ENCODE measurements at regions of chr9 and their contacts with region 1.

Region 1: GRCh38 chr9:133144137-133144903 is 19.4 kb downstream of the GBGT1 start:
- DNase-seq: peak; percentile 98
- H3K4me3 Mint-ChIP-seq: peak overlapping the region; percentile 67
- H3K27ac Mint-ChIP-seq: peak overlapping the region; percentile 88
- H3K4me1 Mint-ChIP-seq: peaks cover 70% of the 10 kb centered on the region
- H3K27me3 Mint-ChIP-seq: no peaks in the 10 kb centered on the region

Region 2: GRCh38 chr9:132849185-132849706 is 295.1 kb before region 1 on chr9:
- CTCF ChIA-PET with region 1: no interaction called
- POLR2A ChIA-PET with region 1: no interaction called
- intact Hi-C with region 1: no loop called
- DNase-seq: peak; percentile 23
- H3K4me3 Mint-ChIP-seq: peak overlapping the region; percentile 1
- H3K27ac Mint-ChIP-seq: peak overlapping the region; percentile 49
- H3K4me1 Mint-ChIP-seq: peaks cover 6% of the 10 kb centered on the region
- H3K27me3 Mint-ChIP-seq: no peaks in the 10 kb centered on the region

Region 3: DNA sequence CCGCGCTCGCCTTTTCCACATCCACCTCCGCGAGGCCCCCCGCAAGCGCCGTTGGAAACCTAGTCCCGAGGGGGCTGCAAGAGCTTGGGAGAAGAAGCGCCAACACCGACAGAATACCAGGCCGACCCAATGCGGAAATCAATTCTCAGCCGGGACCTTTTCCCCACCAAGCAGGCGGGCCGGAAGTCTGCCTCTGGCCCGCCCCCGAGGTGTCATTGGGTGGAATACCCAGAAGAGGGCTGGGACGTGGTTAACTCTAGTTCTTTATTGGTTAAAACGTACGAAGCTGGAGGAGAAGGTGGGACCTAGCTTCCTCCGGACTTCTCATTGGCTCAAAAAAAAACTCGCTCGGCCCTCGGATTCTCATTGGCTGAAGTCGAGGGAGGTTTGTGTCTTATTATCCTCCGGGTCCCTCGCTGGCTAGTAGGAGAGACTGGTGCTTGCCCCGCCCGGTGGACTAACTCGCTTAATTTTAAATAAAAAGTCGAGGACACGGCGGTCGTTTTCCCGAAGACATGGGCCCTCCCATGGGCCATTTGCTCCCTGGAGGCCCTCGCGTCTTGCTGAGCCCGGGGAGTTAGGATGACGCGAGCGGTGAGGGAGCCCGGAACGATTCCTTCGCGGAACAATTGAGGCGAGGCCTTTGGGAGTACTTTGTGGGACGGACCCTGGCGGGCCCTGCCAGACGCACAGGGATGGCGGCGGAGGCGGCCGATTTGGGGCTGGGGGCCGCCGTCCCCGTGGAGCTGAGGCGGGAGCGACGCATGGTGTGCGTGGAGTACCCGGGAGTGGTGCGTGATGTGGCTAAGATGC is 113.8 kb before region 1 on chr9 and contains the start of gene GTF3C5:
- CTCF ChIA-PET with region 1: interaction called, 42 read pairs
- POLR2A ChIA-PET with region 1: interaction called, 7 read pairs
- intact Hi-C with region 1: loop called (anchors 1 kb)
- DNase-seq: peak; percentile 95
- H3K4me3 Mint-ChIP-seq: peak within 1 kb of the TSS; percentile 99
- H3K27ac Mint-ChIP-seq: peak within 1 kb of the TSS; percentile 90
- H3K4me1 Mint-ChIP-seq: peaks cover 42% of the 10 kb centered on the region
- H3K27me3 Mint-ChIP-seq: no peaks in the 10 kb centered on the region
- total RNA-seq, gene GTF3C5: 80.3 to 81.2 TPM

Region 4: DNA sequence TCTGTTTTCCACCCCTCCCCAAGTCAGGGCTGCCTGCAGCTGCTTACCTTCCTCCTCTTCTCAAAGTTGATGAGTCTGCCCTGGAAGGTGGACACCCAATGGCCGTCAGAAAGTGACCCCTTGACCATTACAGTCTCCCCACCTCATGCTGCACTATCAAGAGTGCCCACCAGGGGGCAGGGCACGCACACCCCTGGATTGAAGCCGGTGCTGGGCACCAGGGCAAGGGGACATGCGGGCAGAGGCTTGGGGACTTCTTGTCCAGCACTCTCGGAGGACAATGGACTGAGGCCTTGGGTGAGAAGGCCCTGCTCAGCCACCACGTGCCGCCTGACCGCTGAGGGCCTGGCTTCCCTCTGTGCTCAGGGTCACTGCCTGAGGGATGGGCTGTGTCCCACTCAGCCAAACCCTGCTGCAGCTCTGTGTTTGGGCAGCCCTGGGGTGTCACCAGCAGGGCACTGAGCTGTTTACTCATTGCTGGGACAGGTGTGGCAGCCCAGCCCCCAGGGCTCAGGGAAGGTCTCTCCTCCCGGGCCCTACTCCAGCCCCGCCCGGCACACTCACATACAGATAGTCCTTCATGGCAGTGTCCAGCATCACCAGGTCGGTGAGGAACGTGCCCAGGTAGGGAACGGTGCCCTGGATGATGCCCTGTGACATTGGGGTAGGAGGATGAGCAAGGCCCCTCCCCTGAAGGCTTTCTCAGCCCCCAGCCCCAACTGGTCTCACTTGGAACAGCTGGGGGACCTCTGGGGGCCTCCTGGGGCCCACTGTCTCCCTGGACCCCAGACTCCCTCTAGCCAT is 40.9 kb before region 1 on chr9:
- CTCF ChIA-PET with region 1: interaction called, 552 read pairs
- POLR2A ChIA-PET with region 1: interaction called, 4 read pairs
- intact Hi-C with region 1: loop called (anchors 1 kb)
- DNase-seq: peak; percentile 63
- H3K4me3 Mint-ChIP-seq: no peak overlapping the region
- H3K27ac Mint-ChIP-seq: peak overlapping the region; percentile 44
- H3K4me1 Mint-ChIP-seq: no peaks in the 10 kb centered on the region
- H3K27me3 Mint-ChIP-seq: no peaks in the 10 kb centered on the region

Region 5: DNA sequence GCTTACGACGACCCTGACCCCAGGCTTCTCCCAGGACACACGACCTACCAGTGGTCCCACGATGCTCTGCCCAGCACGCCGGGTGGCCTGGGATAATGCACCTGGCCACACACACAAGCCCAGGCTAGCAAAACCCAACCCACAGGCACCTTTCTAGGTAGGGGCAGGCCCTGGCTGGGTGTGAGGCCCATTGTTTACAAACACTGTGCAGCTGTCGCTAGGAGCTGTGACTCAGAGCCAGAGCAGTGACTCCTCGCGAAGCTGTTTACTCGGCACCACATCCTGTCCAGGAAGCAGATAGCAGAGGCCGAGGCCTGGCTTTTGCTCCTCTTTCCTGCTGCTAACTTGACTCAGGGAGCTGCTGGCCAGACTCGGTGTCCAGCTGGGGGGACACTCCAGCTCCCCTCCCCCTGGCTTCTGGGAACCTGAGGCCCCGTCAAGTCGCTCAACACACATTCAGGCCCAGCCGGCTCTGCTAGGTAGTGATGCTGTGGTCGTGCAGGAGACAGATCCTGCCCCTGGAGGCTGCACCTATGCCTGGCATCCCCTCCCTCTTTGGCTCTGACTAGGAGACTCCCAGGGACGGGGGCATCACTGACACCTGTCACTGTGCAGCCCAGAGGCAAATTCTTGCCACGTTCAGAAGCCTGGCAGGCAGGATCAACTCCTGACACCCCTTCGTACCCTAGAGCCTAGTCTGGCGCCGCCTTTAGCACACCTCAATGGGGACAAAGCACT is 10.5 kb before region 1 on chr9:
- CTCF ChIA-PET with region 1: interaction called, 111 read pairs
- POLR2A ChIA-PET with region 1: interaction called, 42 read pairs
- intact Hi-C with region 1: loop called (anchors 1 kb)
- DNase-seq: peak; percentile 96
- H3K4me3 Mint-ChIP-seq: peak overlapping the region; percentile 70
- H3K27ac Mint-ChIP-seq: peak overlapping the region; percentile 100
- H3K4me1 Mint-ChIP-seq: peaks cover 79% of the 10 kb centered on the region
- H3K27me3 Mint-ChIP-seq: no peaks in the 10 kb centered on the region

Region 6: GRCh38 chr9:133205996-133206931 is 61.9 kb after region 1 on chr9:
- CTCF ChIA-PET with region 1: no interaction called
- POLR2A ChIA-PET with region 1: no interaction called
- intact Hi-C with region 1: no loop called
- DNase-seq: peak; percentile 6
- H3K4me3 Mint-ChIP-seq: no peak overlapping the region
- H3K27ac Mint-ChIP-seq: no peak overlapping the region
- H3K4me1 Mint-ChIP-seq: no peaks in the 10 kb centered on the region
- H3K27me3 Mint-ChIP-seq: peaks cover 11% of the 10 kb centered on the region

Region 7: DNA sequence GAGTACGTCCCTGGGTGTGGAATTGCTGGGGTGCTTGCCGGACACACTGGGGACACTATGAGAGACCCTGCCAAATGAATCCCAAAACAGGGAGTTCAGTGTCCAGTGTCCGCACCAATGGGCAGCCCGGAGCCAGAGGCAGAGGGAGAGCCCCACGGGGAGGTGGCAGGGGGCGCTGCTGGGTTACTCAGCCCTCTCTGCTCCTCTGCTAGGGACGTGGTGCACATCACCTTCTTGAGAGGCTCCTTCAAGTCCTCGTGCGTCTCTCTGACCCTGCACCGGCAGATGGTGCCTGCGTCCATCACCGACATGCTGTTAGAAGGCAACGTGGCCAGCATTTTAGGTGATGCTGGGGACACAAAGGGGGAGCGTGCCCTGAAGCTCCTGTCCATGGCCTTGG is 252.6 kb after region 1 on chr9:
- CTCF ChIA-PET with region 1: no interaction called
- POLR2A ChIA-PET with region 1: no interaction called
- intact Hi-C with region 1: no loop called
- DNase-seq: no peak
- H3K4me3 Mint-ChIP-seq: no peak overlapping the region
- H3K27ac Mint-ChIP-seq: no peak overlapping the region
- H3K4me1 Mint-ChIP-seq: no peaks in the 10 kb centered on the region
- H3K27me3 Mint-ChIP-seq: no peaks in the 10 kb centered on the region

Region 8: DNA sequence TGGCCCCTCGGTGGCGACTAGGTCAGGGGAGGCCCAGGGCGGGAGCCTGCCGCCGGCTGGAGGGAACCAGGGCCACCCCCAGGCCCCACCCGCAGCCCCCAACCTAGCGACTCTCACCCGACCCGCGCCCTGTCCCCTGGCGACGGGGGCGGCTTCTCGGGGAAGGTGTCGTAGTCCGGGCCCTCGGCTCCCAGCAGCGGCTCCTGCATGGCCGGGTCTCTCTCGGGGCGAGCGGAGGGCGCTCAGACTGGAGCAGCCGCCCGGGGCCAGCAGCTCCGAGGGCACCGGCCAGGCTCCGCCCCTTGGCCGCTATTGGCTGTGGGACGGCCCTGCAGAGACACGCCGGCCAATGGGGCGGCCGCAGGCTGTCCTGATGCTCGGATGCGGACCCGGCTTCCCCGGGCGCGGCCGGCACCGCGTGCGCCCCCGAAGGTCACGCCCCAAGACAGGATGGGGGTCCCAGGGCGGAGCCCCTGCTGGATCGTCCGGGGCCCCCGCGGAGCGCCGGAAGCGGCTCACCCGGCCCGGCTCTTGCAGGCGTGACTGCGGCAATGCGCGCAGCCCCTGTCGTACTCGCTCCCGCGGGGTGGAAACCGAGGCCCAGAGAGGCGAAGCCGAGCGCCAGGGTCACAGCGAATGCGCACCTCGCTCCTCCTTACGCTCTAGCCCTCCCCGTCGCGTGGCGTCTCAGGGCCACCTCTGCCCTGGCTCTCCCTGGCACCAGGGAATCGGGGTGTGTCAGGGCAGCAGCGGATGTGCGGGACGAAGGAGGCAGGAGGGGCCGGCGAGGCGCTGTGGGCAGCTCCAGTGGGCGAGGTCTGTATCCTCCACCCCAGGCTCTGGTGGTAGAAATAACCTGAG is 334.8 kb after region 1 on chr9 and contains the start of gene SLC2A6:
- CTCF ChIA-PET with region 1: no interaction called
- POLR2A ChIA-PET with region 1: no interaction called
- intact Hi-C with region 1: no loop called
- DNase-seq: peak; percentile 86
- H3K4me3 Mint-ChIP-seq: peak within 1 kb of the TSS; percentile 61
- H3K27ac Mint-ChIP-seq: no peak within 1 kb of the TSS
- H3K4me1 Mint-ChIP-seq: peaks cover 5% of the 10 kb centered on the region
- H3K27me3 Mint-ChIP-seq: no peaks in the 10 kb centered on the region
- total RNA-seq, gene SLC2A6: 2.2 to 2.6 TPM